Breast epithelium (tissue), 4 donors: ENCODE measurements at regions of chr10 and their contacts with region 1.

Region 1: GRCh38 chr10:110643653-110644597 is at the start of gene RBM20:
- DNase-seq: no peak
- H3K4me3 ChIP-seq: peak within 1 kb of the TSS; percentile 49 to 77 (median 62)
- H3K27ac ChIP-seq: no peak within 1 kb of the TSS
- H3K4me1 ChIP-seq: peaks cover 5 to 8% of the 10 kb centered on the region in 2 donors
- H3K27me3 ChIP-seq: peaks cover 11 to 56% of the 10 kb centered on the region in 2 donors
- CTCF ChIP-seq: no peak
- POLR2A ChIP-seq: no peak
- total RNA-seq, gene RBM20: 0.48 to 3.1 (median 1.6) TPM

Region 2: GRCh38 chr10:110619514-110620397 is 24.2 kb before region 1 on chr10:
- intact Hi-C with region 1: loop called (anchors 1 kb)
- DNase-seq: no peak
- H3K4me3 ChIP-seq: no peak overlapping the region
- H3K27ac ChIP-seq: no peak overlapping the region
- H3K4me1 ChIP-seq: no peaks in the 10 kb centered on the region
- H3K27me3 ChIP-seq: no peaks in the 10 kb centered on the region
- CTCF ChIP-seq: no peak
- POLR2A ChIP-seq: no peak

Region 3: GRCh38 chr10:110684800-110685446 is 41.0 kb after region 1 on chr10:
- intact Hi-C with region 1: no loop called
- DNase-seq: no peak
- H3K4me3 ChIP-seq: no peak overlapping the region
- H3K27ac ChIP-seq: no peak overlapping the region
- H3K4me1 ChIP-seq: no peaks in the 10 kb centered on the region
- H3K27me3 ChIP-seq: no peaks in the 10 kb centered on the region
- CTCF ChIP-seq: no peak
- POLR2A ChIP-seq: no peak